Panc1 (cell line): ENCODE measurements at regions of chr15 and their contacts with region 1.

Region 1: DNA sequence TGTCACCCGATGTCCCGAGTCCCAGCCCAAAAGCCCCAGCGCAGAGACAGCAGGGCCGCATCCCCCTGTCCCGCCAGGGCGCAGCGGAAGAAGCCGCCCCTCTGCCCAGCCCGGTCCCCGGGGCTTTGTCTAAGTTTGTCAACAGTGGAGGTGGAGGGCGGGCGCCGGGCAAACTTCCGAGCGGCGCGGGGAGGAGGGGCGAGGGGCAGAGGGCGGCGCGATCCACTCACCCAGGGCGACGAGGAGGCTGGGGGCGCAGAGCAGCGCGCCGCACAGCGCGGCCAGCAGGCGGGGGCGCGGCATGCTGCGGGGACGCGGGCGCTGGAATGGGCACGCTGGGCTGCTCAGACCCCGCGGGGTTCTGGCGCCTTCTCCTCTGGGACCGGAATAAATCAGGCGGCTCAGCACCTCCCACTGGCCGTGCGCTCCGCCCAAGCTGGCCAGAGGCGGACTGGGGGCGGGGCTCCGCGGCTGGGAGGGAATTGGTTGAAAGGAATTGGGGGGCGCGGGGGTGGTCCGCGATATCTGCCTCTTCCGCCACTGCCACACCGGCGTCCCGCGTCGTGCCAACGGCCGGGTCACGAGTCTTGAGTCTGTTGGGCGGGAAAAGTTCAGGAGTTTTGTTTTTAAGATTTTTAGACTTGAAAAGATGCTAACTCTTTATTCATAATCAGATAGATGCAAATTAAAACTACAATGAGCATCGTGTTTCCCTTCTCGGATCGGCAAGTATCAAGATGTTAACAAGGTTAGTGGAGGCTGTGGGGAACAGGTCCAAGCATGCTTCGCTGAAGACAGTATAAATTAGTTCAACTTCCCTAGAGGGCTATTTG is at the start of gene MFGE8:
- DNase-seq: no peak
- ATAC-seq: peak; percentile 89
- H3K4me3 ChIP-seq: peak within 1 kb of the TSS; percentile 66 to 90
- H3K27ac ChIP-seq: peak within 1 kb of the TSS; percentile 97
- H3K4me1 ChIP-seq: peaks cover 47% of the 10 kb centered on the region
- H3K27me3 ChIP-seq: no peaks in the 10 kb centered on the region
- CTCF ChIP-seq: no peak; the same call in 1 of the 2 replicates
- total RNA-seq, gene MFGE8: 1,799 TPM

Region 2: DNA sequence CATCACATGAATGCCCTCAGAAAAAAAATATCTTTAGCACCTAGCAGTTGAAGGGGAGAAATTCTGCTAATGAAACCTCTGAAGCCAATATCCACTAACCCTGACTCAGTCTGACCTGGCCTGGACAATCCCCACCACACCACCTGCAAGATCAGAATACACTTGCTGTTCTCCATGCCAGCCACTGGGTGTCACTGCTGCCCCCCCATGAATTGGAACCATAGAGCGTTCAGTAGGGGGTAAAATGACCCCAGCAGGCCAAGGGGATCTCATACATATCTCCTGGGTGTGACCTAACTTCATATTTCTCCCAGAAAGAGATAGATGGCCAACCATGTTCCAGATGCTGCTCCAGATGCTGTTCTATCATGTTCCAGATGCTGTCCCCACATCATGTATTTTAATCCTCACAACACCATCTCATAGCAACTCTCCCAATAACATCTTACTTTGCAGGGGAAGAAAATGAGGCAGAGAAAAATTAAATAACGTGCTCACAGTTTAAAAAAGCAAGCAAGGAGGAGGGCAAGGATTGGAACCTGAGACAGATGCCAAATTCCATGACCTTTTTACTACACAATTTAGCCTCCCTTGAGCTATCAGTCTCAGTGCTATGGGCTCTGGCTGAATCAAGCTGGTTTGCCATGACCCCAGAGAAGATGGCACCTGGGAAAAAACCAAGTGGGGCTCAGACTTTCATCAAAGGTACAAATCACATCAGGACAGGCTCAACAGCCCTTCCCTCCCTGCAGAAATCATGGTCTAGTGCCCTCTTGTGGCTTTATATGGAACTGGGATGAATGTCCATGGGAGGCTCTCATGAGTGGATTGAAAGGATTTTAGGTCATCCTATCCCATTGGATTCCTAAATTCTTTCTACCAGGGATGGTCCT is 669.1 kb before region 1 on chr15:
- CTCF ChIA-PET with region 1: no interaction called
- POLR2A ChIA-PET with region 1: no interaction called
- in situ Hi-C with region 1: no loop called
- intact Hi-C with region 1: no loop called
- DNase-seq: no peak
- ATAC-seq: no peak
- H3K4me3 ChIP-seq: no peak overlapping the region
- H3K27ac ChIP-seq: no peak overlapping the region
- H3K4me1 ChIP-seq: no peaks in the 10 kb centered on the region
- H3K27me3 ChIP-seq: peaks cover 2% of the 10 kb centered on the region; the same call in 1 of the 2 replicates
- CTCF ChIP-seq: peak; percentile 73

Region 3: DNA sequence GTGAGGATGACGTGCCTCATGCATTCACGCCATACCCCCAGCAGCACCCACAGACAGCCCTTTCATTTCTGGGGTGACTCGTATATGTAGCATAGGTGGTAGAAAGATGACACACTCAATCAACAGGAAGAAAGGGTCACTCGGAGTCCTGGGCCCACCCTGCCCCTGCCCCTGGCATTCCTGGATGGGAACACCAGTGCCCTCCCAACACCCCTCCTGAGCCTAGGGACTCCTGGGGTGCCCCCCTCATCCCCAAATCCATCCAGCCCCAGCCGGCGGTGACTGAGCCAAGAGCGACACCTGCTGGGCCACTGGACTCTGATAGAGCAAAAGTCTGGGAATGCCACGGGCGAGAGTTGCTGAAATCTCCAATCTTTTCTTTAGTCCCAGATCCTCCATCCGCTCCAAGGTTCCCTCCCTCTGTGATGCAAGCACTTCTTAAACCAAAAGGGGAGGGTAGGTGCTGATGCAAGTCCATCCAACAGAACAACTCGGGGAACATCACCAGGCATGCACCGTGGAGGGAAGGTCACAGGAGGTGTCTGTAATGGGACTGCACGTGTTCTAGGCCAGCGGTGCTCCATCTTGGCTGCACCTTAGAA is 78.9 kb before region 1 on chr15:
- CTCF ChIA-PET with region 1: no interaction called
- POLR2A ChIA-PET with region 1: no interaction called
- in situ Hi-C with region 1: no loop called
- intact Hi-C with region 1: no loop called
- DNase-seq: no peak
- ATAC-seq: peak; percentile 83
- H3K4me3 ChIP-seq: no peak overlapping the region
- H3K27ac ChIP-seq: no peak overlapping the region
- H3K4me1 ChIP-seq: no peaks in the 10 kb centered on the region
- H3K27me3 ChIP-seq: no peaks in the 10 kb centered on the region
- CTCF ChIP-seq: peak; percentile 92

Region 4: DNA sequence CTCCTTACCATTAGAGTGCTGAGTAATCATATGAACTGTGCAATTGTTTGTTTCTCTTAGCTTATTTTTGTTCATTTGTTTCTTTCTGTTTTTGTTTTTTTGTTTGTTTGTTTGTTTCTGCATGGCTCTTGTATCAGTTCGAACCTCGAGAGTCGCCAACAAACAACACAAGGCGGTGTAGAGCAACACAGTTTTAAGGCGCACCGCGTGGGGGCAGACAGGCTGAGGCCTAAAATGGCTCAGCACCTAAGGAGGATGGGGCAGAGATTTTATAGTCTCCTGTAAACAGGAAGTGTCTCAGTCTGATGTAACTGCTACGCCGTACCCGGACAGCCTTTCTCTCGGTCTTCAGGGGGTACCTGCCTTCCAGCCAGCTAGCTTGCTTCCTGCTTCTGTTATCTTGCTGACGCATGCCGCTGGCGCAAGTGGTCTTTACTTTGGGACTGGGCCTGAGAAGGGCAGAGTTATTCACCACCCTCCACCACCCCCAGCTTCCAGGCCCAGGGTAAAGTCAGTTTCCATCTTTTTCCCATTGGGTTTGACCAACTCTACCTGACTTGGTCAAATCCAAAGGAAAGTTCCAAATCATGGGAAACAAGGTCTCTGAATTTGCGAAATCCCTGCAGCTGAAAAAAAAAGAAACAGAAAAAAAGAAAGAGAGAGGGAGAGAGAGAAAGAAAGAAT is 25.7 kb after region 1 on chr15:
- CTCF ChIA-PET with region 1: no interaction called
- POLR2A ChIA-PET with region 1: interaction called, 12 read pairs
- in situ Hi-C with region 1: no loop called
- intact Hi-C with region 1: no loop called
- DNase-seq: no peak
- ATAC-seq: no peak
- H3K4me3 ChIP-seq: no peak overlapping the region
- H3K27ac ChIP-seq: peak overlapping the region; percentile 58; the same call in 1 of the 2 replicates
- H3K4me1 ChIP-seq: 0 out of 2 replicates have a peak, but pooled peaks cover 3% of the 10 kb centered on the region
- H3K27me3 ChIP-seq: no peaks in the 10 kb centered on the region
- CTCF ChIP-seq: no peak

Region 5: DNA sequence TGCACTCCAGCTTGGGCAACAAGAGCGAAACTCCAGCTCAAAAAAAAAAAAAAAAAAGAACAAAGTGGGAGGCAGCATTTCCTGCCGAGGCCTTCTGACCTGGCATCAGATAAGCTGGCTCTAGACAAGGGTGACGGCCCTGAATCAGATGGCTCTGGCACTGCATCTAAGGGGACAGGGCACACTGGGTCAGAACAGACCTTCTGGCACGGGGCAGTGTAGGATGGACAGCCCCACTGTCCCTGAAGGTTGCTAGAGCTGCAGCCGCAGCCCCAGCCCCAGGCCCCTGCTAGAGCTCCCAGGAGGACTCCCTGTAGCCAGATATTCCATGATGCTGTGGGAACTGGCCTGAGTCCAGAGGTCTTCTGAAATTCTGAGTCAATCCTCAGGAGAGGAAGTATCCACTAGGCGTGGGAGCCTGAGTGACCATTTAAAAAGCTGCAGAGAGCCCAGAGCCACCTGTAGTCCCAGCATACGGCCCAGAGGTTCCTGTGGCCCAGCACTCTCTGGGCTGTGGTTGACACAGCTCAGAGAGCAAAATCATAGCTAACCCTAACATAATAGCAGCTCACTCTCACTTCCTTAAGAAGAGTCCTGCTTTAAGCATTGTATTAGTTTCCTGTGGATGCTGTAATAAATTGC is 69.2 kb after region 1 on chr15:
- CTCF ChIA-PET with region 1: interaction called, 9 read pairs
- POLR2A ChIA-PET with region 1: interaction called, 4 read pairs
- in situ Hi-C with region 1: no loop called
- intact Hi-C with region 1: loop called (anchors 5 kb)
- DNase-seq: no peak
- ATAC-seq: peak; percentile 71
- H3K4me3 ChIP-seq: no peak overlapping the region
- H3K27ac ChIP-seq: peak overlapping the region; percentile 98
- H3K4me1 ChIP-seq: peaks cover 56% of the 10 kb centered on the region
- H3K27me3 ChIP-seq: no peaks in the 10 kb centered on the region
- CTCF ChIP-seq: no peak

Region 6: DNA sequence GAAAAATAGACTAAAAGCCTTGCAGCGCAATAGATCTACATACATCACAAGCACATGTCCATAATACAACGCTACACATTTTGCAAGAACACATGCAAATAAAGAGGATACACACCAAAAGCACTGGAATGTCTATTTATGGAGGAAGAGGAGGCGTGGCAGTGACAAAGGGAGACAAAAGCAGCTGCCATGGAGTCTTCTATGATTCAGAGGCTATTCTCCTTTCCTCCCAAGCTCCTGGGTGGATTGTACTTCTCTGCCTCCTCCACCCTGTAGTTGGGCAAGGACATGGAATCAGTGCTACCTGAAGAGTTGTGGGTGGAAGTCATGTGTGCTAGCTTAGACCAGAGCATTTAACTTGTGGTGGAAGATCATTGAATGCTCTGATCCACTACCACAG is 117.1 kb after region 1 on chr15:
- CTCF ChIA-PET with region 1: no interaction called
- POLR2A ChIA-PET with region 1: no interaction called
- in situ Hi-C with region 1: no loop called
- intact Hi-C with region 1: no loop called
- DNase-seq: no peak
- ATAC-seq: no peak
- H3K4me3 ChIP-seq: no peak overlapping the region
- H3K27ac ChIP-seq: no peak overlapping the region
- H3K4me1 ChIP-seq: no peaks in the 10 kb centered on the region
- H3K27me3 ChIP-seq: no peaks in the 10 kb centered on the region
- CTCF ChIP-seq: no peak